ENCODE measurements at regions of chr4 and their contacts with region 1.

Region 1: DNA sequence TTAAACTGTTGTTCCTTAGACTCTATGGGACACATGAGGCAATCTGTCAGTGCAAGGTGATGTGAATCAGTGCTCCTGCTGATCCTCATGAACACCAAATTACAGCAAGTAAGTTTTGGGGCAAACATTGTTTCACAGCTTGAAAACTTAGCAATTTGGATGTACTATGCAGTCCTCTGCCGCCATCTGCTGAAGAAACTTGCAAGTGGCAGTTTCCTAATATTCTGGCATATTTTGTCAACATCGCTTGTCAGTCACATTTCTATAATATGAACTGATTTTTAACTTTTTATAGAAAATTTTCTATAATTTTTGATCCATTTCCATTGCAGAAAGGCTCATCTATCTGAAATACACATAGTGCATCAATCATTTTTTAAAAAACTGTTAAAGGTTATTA is 56.3 kb downstream of the ZAR1 start:
- DNase-seq: no peak
- H3K4me3 ChIP-seq: no peak overlapping the region
- H3K27ac ChIP-seq: no peak overlapping the region
- H3K4me1 ChIP-seq: no peaks in the 10 kb centered on the region
- H3K27me3 ChIP-seq: no peaks in the 10 kb centered on the region
- CTCF ChIP-seq: peak in 1 of 4 experiments; percentile 23
- EP300 ChIP-seq: no peak
- POLR2A ChIP-seq: no peak

Region 2: GRCh38 chr4:48420144-48420543 is 126.2 kb before region 1 on chr4:
- intact Hi-C with region 1: no loop called
- DNase-seq: no peak
- H3K4me3 ChIP-seq: no peak overlapping the region
- H3K27ac ChIP-seq: no peak overlapping the region
- H3K4me1 ChIP-seq: no peaks in the 10 kb centered on the region
- H3K27me3 ChIP-seq: no peaks in the 10 kb centered on the region
- CTCF ChIP-seq: no peak
- EP300 ChIP-seq: no peak
- POLR2A ChIP-seq: no peak

Region 3: DNA sequence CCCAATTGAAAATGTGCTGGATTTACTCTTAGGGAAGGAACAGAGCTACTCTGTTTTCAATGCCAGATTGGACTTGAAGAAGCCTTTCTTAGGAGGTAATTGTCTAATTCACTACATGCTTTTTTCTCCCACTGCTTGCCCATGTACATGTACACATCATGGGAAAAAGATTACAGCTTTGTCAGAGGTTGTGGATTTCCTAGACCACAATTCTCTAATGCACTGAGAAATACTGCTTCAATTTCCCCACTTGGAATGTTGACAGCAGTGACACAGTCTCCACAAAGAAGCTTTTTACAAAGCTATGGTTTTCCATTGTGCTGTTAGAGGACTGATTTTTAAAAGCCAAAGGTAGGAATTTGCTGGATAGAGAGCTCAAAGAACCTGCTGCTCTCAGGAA is 36.8 kb before region 1 on chr4:
- intact Hi-C with region 1: loop called (anchors 5 kb)
- DNase-seq: no peak
- H3K4me3 ChIP-seq: no peak overlapping the region
- H3K27ac ChIP-seq: no peak overlapping the region
- H3K4me1 ChIP-seq: no peaks in the 10 kb centered on the region
- H3K27me3 ChIP-seq: no peaks in the 10 kb centered on the region
- CTCF ChIP-seq: no peak
- EP300 ChIP-seq: no peak
- POLR2A ChIP-seq: no peak